ENCODE measurements at regions of chr1 and their contacts with region 1.

Region 1: GRCh38 chr1:6343506-6344405 is 49.8 kb downstream of the ACOT7 start:
- DNase-seq: peak; percentile 31 to 92
- H3K4me3 ChIP-seq: no peak overlapping the region
- H3K27ac ChIP-seq: no peak overlapping the region
- H3K4me1 ChIP-seq: peaks cover 3 to 7% (median 6%) of the 10 kb centered on the region in 4 experiments; a peak in 5 of 7 replicates
- H3K27me3 ChIP-seq: no peaks in the 10 kb centered on the region
- CTCF ChIP-seq: peak in 2 of 3 experiments; percentile 97 to 100; a peak in 3 of 4 replicates
- EP300 ChIP-seq: no peak
- POLR2A ChIP-seq: no peak
- RAD21 ChIP-seq: peak; percentile 99

Region 2: DNA sequence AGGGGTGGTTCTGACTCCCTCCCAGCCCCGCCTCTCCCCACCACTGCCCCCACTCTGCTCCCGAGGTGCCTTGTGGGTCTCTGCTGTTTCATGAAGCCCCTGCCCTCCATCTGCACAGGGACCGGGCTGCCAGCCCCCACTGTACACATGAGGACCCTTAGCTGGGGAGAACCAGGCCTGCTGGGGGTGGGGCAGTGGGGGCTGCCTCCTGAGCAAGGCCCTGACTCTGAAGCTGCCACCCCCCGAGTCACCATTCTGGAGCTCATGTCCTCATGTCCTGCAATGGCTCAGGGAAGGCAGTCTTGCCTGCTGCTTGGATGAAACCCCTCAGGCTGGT is 91.4 kb before region 1 on chr1:
- CTCF ChIA-PET with region 1: interaction called, 280 read pairs
- POLR2A ChIA-PET with region 1: interaction called, 9 read pairs
- DNase-seq: no peak
- H3K4me3 ChIP-seq: no peak overlapping the region
- H3K27ac ChIP-seq: no peak overlapping the region
- H3K4me1 ChIP-seq: peaks cover 0 to 9% (median 6%) of the 10 kb centered on the region in 4 experiments; a peak in 4 of 7 replicates
- H3K27me3 ChIP-seq: peaks cover 16 to 41% (median 34%) of the 10 kb centered on the region in 4 experiments
- CTCF ChIP-seq: no peak
- EP300 ChIP-seq: no peak
- POLR2A ChIP-seq: no peak
- RAD21 ChIP-seq: no peak

Region 3: GRCh38 chr1:6269720-6270400 is 73.9 kb before region 1 on chr1:
- CTCF ChIA-PET with region 1: interaction called, 40 read pairs
- POLR2A ChIA-PET with region 1: no interaction called
- DNase-seq: no peak
- H3K4me3 ChIP-seq: no peak overlapping the region
- H3K27ac ChIP-seq: no peak overlapping the region
- H3K4me1 ChIP-seq: peaks cover 0 to 18% (median 8%) of the 10 kb centered on the region in 4 experiments; a peak in 6 of 7 replicates
- H3K27me3 ChIP-seq: no peaks in the 10 kb centered on the region
- CTCF ChIP-seq: no peak
- EP300 ChIP-seq: no peak
- POLR2A ChIP-seq: no peak
- RAD21 ChIP-seq: no peak

Region 4: GRCh38 chr1:6294615-6295556 is 48.9 kb before region 1 on chr1:
- CTCF ChIA-PET with region 1: interaction called, 14 read pairs
- POLR2A ChIA-PET with region 1: no interaction called
- DNase-seq: no peak
- H3K4me3 ChIP-seq: no peak overlapping the region
- H3K27ac ChIP-seq: no peak overlapping the region
- H3K4me1 ChIP-seq: no peaks in the 10 kb centered on the region
- H3K27me3 ChIP-seq: no peaks in the 10 kb centered on the region
- CTCF ChIP-seq: no peak
- EP300 ChIP-seq: no peak
- POLR2A ChIP-seq: no peak
- RAD21 ChIP-seq: no peak

Region 5: GRCh38 chr1:6359216-6360116 is 15.7 kb after region 1 on chr1:
- CTCF ChIA-PET with region 1: interaction called, 101 read pairs
- POLR2A ChIA-PET with region 1: no interaction called
- DNase-seq: peak in 1 of 2 experiments; percentile 57
- H3K4me3 ChIP-seq: no peak overlapping the region
- H3K27ac ChIP-seq: 0 out of 2 replicates have a peak overlapping the region, but pooled peaks have one; percentile 21
- H3K4me1 ChIP-seq: peaks cover 3 to 27% (median 14%) of the 10 kb centered on the region in 4 experiments
- H3K27me3 ChIP-seq: no peaks in the 10 kb centered on the region
- CTCF ChIP-seq: no peak
- EP300 ChIP-seq: no peak
- POLR2A ChIP-seq: no peak
- RAD21 ChIP-seq: no peak

Region 6: GRCh38 chr1:6423321-6423999 is 79.7 kb after region 1 on chr1:
- CTCF ChIA-PET with region 1: interaction called, 1,769 read pairs
- POLR2A ChIA-PET with region 1: no interaction called
- DNase-seq: peak; percentile 57 to 92
- H3K4me3 ChIP-seq: peak overlapping the region in 3 of 4 experiments; percentile 15 to 52 (median 19); a peak in 5 of 8 replicates
- H3K27ac ChIP-seq: no peak overlapping the region
- H3K4me1 ChIP-seq: peaks cover 0 to 30% (median 11%) of the 10 kb centered on the region in 4 experiments; a peak in 5 of 7 replicates
- H3K27me3 ChIP-seq: peaks cover 63 to 87% (median 79%) of the 10 kb centered on the region in 4 experiments
- CTCF ChIP-seq: peak in 2 of 3 experiments; percentile 95 to 96; a peak in 3 of 4 replicates
- EP300 ChIP-seq: no peak
- POLR2A ChIP-seq: no peak
- RAD21 ChIP-seq: peak; percentile 54 to 69